Dendritic cell treated with granulocyte-macrophage colony-stimulating factor and Interleukin-4, amounts not matched to agents 40 ng/mL and 50 ng/mL, for 4 days (primary cell): ENCODE measurements at regions of chr17 and their contacts with region 1.

Region 1: DNA sequence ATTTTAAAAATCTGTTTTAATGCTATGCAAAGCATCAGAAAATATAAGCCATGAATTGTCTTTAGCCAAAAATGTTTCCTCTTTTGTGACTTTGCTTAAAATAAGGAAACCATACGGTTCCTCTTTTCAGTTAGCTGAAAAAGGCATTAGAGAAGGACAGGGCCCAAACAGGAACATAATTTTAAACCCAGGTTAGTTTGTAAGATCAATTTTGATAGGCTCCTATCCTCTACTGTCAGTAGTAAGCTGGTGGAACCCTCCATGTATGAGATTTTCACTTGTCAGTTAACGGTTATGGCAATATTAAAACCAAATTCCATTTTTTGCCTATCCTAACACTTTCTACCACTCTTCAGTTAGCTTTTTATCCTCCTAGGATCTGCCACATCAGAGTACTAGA is 4.3 kb downstream of the EVI2B start:
- H3K4me3 Mint-ChIP-seq: peak overlapping the region; percentile 84
- H3K27ac Mint-ChIP-seq: peak overlapping the region; percentile 97
- H3K4me1 Mint-ChIP-seq: peaks cover 52% of the 10 kb centered on the region
- H3K27me3 Mint-ChIP-seq: no peaks in the 10 kb centered on the region

Region 2: DNA sequence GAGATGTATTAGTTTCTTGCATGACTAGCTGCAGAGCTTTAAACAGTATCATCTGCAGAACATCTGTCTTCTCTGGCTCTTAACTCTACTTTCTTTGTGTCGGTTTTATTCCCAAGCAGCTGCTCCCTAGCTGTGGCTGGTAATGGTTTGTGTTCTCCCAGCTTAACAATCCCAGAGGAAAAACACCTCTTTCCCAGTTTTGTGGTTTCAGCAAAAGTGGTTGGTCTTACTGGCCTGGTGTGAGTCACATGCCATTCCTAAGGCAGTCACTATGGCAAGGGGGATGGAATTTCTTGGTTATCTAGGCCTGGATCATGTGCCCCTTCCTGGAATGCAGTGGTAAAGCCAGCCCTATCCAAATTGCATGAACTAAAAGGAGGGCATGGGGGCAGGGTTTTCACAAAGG is 40.0 kb before region 1 on chr17:
- intact Hi-C with region 1: loop called (anchors 5 kb)
- H3K4me3 Mint-ChIP-seq: no peak overlapping the region
- H3K27ac Mint-ChIP-seq: no peak overlapping the region
- H3K4me1 Mint-ChIP-seq: peaks cover 27% of the 10 kb centered on the region
- H3K27me3 Mint-ChIP-seq: no peaks in the 10 kb centered on the region